ENCODE measurements at regions of chr12 and their contacts with region 1.

Region 1: GRCh38 chr12:57899010-57899662 is 42.2 kb upstream of the ATP23 start:
- DNase-seq: peak; percentile 89
- H3K4me3 Mint-ChIP-seq: peak overlapping the region; percentile 80
- H3K27ac Mint-ChIP-seq: peak overlapping the region; percentile 98
- H3K4me1 Mint-ChIP-seq: peaks cover 46% of the 10 kb centered on the region
- H3K27me3 Mint-ChIP-seq: peaks cover 2% of the 10 kb centered on the region

Region 2: DNA sequence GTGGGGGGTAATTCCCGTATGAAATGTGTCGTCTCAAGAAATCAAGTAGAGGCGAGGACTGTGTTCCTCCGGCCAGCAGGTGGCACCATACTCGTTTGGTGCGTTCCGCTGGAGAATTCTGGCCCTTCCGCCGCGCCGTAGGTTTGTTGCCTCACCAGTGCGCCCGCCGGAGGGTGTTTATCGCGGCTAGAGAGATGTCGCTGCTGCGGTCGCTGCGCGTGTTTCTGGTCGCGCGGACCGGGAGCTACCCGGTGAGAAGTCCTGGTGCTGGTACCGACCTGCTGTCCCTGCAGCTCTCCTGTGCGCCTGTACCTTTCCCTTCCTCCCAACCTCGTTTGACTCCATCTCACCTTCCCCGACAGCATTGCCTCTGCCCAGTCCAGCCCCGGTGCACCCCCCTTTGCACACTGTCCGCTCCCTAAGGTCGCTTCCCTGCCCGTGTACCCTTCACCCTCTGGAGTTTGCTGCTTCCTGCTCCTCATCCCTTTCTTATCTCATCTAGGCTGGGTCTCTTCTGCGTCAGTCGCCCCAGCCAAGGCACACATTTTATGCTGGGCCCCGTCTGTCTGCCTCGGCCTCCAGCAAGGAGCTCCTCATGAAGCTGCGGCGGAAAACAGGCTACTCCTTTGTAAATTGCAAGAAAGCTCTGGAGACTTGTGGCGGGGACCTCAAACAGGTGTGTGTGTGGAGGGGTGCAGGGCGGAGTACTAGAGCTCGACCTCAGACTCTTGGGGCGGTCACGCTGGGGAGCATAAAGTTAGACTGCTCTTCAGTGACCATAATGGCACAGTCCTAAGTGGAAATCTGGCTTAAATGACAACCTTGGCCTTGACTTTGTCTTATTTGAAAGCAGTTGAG is 116.3 kb before region 1 on chr12 and contains the start of gene TSFM:
- intact Hi-C with region 1: loop called (anchors 2 kb)
- DNase-seq: peak; percentile 99
- H3K4me3 Mint-ChIP-seq: peak within 1 kb of the TSS; percentile 99
- H3K27ac Mint-ChIP-seq: peak within 1 kb of the TSS; percentile 99
- H3K4me1 Mint-ChIP-seq: peaks cover 30% of the 10 kb centered on the region
- H3K27me3 Mint-ChIP-seq: no peaks in the 10 kb centered on the region
- total RNA-seq, gene TSFM: 62.5 and 64.3 TPM in 2 replicates

Region 3: GRCh38 chr12:57836442-57837375 is 62.4 kb before region 1 on chr12:
- intact Hi-C with region 1: loop called (anchors 1 kb)
- DNase-seq: peak; percentile 81
- H3K4me3 Mint-ChIP-seq: peak overlapping the region; percentile 67
- H3K27ac Mint-ChIP-seq: peak overlapping the region; percentile 93
- H3K4me1 Mint-ChIP-seq: peaks cover 74% of the 10 kb centered on the region
- H3K27me3 Mint-ChIP-seq: no peaks in the 10 kb centered on the region

Region 4: DNA sequence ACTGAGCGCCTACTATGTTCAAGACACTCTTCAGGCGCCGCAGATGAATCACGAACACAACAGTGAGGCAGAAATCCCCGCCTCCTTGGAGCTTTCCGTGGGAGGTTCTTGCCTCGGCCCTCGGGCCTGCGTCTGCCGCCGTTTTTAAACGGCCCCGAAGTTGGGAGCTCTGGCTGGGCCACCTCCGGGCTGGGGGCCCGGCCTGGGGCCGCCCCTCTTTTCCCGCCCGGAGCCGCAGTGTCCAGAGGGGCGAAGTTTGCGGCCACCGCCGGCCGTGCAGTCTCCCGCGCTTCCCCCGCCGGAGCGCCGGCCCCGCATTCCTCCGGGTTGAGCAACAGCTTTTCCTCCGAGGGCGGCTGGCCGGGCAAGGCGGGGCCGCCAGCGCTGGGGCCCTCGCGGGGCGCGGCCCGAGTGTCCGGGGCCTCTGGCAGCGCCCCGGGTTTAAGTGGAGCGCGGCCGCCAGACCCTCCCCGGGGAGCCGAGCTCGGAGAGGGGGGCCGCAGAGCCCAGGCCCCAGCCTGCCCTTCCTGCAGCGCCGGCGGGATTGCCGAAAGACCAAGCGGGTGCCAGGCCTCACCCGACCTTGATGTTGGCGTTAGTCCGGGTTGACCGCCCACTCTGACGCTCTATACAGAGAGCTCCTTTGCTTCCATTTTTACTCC is 33.9 kb before region 1 on chr12:
- intact Hi-C with region 1: loop called (anchors 1 kb)
- DNase-seq: peak; percentile 85
- H3K4me3 Mint-ChIP-seq: peak overlapping the region; percentile 77
- H3K27ac Mint-ChIP-seq: peak overlapping the region; percentile 71
- H3K4me1 Mint-ChIP-seq: peaks cover 9% of the 10 kb centered on the region
- H3K27me3 Mint-ChIP-seq: peaks cover 15% of the 10 kb centered on the region

Region 5: GRCh38 chr12:57935839-57936512 is 36.8 kb after region 1 on chr12:
- intact Hi-C with region 1: loop called (anchors 2 kb)
- DNase-seq: peak; percentile 98
- H3K4me3 Mint-ChIP-seq: peak overlapping the region; percentile 100
- H3K27ac Mint-ChIP-seq: peak overlapping the region; percentile 100
- H3K4me1 Mint-ChIP-seq: peaks cover 37% of the 10 kb centered on the region
- H3K27me3 Mint-ChIP-seq: peaks cover 2% of the 10 kb centered on the region

Region 6: DNA sequence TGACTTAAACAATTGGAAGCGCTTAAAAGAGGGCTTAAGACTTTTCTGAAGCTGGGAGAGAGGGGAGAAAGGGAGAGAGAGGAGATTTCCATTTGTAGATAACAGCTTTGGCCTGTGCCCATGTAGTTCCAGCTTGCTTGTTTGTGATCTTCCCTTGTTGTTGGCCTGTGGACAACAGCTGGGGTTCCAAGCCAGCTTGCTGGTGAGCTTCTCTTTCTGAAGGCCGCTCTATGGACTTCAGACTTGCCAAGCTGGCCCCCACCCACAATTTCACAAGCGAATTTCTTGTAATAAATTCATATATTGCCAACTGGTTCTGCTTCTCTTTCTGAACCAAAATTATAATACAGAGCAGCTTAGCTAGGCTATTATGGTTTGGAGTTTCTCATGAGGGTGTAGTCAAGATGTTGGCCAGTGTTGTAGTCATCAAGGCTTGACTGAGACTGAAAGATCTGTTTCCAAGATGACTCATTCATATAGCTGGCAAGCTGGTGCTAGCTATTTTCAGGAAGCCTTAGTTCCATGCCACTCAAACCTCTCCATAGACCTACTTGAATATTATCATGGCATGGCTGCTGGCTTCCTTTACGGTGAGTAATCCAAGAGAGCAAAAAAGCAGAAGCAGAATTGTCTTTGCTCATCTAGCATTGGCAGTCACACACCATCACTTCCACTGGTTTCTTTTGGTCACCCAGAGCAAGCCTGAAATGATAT is 131.6 kb after region 1 on chr12:
- intact Hi-C with region 1: no loop called
- DNase-seq: no peak
- H3K4me3 Mint-ChIP-seq: no peak overlapping the region
- H3K27ac Mint-ChIP-seq: no peak overlapping the region
- H3K4me1 Mint-ChIP-seq: no peaks in the 10 kb centered on the region
- H3K27me3 Mint-ChIP-seq: no peaks in the 10 kb centered on the region

Measured in activated CD4-positive, alpha-beta T cell treated with anti-CD3 and anti-CD28 coated beads, Interleukin-2, amount 10 ng/mL, durations not matched to agents 24 days and 14 days (primary cell).